OCI-LY7 (cell line): ENCODE measurements at regions of chr1 and their contacts with region 1.

Region 1: DNA sequence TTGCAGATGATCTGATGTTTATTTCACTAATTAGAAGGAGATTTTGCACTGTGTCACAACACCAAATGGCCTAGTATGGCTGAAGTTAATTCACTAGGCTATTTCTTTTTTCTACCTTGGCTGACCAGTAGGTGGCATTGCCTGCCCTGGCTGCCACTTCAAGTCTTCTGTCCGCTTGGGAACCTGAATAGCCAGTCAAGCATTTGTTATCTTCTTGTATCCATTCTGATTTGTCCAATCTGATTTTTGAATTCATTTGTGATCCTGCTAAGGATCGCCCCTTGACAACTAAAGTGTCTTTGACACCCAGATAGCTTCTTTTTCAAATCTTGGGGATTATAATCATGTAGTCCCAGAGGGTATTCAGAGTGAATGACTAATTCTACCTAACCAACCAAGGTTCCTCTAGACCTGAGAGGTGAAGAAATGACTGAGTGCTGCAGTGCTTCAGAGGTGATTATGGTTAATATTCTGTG is 99.4 kb downstream of the GIPC2 start:
- DNase-seq: peak; percentile 48
- H3K4me3 ChIP-seq: no peak overlapping the region
- H3K27ac ChIP-seq: no peak overlapping the region
- H3K4me1 ChIP-seq: no peaks in the 10 kb centered on the region
- CTCF ChIP-seq: peak; percentile 96

Region 2: DNA sequence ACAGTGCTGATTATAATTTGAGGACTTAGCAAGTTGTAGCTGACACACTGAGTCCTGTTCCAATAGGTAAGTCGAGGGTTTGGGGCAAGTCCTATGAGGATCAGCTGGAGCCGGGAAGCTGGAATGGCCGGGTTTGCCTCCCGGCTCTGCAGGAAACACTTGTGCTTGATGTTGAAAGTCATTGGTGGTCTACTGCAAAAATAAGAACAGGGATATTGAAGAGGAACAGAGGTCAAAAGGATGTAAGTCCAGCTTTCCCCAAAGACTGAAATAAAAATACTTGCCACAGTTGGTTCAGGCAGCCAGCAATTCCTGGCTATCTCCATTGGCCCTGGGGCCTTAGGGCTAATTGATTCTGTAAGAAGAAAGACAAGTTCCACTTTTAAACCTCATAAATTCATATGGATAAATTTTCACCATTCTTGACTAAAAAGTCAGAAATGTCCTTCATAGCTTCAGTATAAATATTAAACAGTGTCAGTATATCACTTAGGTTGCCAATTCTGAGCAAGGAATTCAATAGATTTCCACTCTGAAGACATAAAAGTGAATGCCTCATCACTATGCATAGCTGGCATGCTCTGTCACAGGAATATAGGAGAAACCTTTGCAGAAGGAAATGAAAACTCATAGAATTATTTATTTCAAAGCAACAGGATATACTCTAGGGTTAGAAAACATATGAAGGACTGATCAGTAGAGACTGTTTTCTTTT is 698.1 kb before region 1 on chr1:
- CTCF ChIA-PET with region 1: no interaction called
- POLR2A ChIA-PET with region 1: no interaction called
- intact Hi-C with region 1: no loop called
- DNase-seq: no peak
- H3K4me3 ChIP-seq: no peak overlapping the region
- H3K27ac ChIP-seq: no peak overlapping the region
- H3K4me1 ChIP-seq: no peaks in the 10 kb centered on the region
- CTCF ChIP-seq: no peak

Region 3: GRCh38 chr1:78254517-78254916 is 109.4 kb after region 1 on chr1:
- CTCF ChIA-PET with region 1: no interaction called
- POLR2A ChIA-PET with region 1: no interaction called
- intact Hi-C with region 1: no loop called
- DNase-seq: no peak
- H3K4me3 ChIP-seq: no peak overlapping the region
- H3K27ac ChIP-seq: no peak overlapping the region
- H3K4me1 ChIP-seq: no peaks in the 10 kb centered on the region
- CTCF ChIP-seq: no peak

Region 4: GRCh38 chr1:78607334-78607927 is 462.3 kb after region 1 on chr1:
- CTCF ChIA-PET with region 1: no interaction called
- POLR2A ChIA-PET with region 1: no interaction called
- intact Hi-C with region 1: loop called (anchors 5 kb)
- DNase-seq: peak; percentile 3
- H3K4me3 ChIP-seq: no peak overlapping the region
- H3K27ac ChIP-seq: no peak overlapping the region
- H3K4me1 ChIP-seq: no peaks in the 10 kb centered on the region
- CTCF ChIP-seq: peak; percentile 76